HepG2 (cell line): ENCODE measurements at regions of chr10 and their contacts with region 1.

Region 1: DNA sequence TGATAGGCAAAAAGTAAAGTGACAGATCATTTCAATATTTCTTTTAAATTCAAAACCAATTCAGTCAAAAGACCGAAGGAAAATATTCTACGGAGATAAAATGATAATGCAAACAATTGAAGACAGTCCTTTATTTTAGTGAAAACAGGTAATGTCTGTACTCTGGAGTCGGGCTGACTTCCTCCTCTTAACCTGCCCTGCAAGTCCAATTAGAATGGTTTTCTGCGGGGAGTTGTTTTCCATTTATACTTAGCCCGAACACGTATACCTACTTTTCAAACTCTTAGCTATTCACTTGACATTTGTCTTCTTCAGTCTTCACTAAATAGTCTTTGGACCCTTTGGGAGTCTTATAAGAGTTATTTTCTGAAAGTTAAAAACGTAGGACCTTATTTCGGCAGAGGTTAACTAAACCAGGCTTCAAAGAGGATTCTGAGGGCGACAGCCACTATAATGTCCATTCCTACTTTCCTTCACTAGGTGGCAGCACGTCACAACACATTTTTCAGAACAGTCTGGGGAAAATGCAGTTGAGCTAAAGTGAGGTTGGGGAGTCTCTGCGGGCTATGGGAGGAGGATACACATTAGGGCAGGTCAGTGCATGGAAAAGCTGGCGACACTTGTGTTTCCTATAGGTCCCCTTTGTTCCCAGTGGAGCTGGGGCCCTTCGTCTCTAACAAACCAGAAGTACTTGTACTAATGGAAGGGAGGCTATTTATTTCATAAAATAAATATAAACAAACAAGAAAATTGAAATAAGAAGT is 472.0 kb downstream of the KCNMA1 start:
- DNase-seq: peak; percentile 40
- ATAC-seq: peak; percentile 80
- H3K4me3 ChIP-seq: no peak overlapping the region
- H3K27ac ChIP-seq: no peak overlapping the region
- H3K4me1 ChIP-seq: no peaks in the 10 kb centered on the region
- H3K27me3 ChIP-seq: 0 out of 5 replicates have a peak, but pooled peaks cover 0 to 1% of the 10 kb centered on the region in 2 experiments
- CTCF ChIP-seq: peak; percentile 83
- EP300 ChIP-seq: no peak
- POLR2A ChIP-seq: no peak
- RAD21 ChIP-seq: peak; percentile 35; the same call in 1 of the 2 replicates

Region 2: DNA sequence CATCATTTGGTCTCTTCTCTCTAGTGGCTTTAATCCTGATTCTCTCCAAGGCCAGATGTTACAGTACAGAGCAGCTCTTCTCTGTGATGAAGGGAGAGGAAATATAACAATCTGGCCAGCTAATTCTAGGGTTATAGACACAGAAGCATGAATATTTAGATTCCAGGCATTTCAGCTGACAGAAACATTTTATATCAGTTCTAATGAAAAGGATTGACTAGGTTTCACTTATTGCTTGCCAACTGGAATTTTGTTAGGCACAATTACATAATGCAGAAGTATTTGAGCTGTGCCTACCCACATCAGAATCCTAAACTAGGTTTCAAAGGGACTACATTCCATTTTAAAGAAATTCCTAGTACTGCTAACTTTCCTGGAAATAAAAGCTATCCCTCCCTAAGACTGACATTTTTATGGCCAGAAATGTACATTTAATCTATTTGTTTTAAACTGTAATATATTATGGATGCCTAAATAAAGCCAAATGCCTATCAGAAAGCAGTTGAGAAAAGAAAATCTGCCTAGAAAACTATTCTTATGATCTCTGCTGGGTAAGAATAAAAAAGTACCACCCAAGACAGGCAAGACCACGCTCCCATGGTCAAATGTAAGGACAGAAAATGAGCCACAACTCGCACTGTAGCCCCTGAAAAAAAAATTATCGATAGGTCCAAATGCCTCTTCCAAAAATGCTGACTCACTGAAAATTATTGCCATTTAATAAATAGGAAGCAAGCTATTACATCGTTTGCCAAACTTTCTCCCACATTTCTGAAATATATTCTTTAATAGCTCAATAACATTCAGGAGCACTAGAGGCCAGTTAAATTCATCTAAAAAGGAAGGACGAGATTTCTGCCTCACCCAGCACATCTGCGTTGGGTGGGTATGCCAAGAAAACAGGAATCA is 26.1 kb before region 1 on chr10:
- CTCF ChIA-PET with region 1: no interaction called
- POLR2A ChIA-PET with region 1: no interaction called
- in situ Hi-C with region 1: no loop called
- intact Hi-C with region 1: loop called (anchors 1 kb)
- DNase-seq: no peak
- ATAC-seq: no peak
- H3K4me3 ChIP-seq: no peak overlapping the region
- H3K27ac ChIP-seq: no peak overlapping the region
- H3K4me1 ChIP-seq: no peaks in the 10 kb centered on the region
- H3K27me3 ChIP-seq: peaks cover 1 to 14% of the 10 kb centered on the region in 2 experiments; a peak in 3 of 5 replicates
- CTCF ChIP-seq: no peak
- EP300 ChIP-seq: no peak
- POLR2A ChIP-seq: no peak
- RAD21 ChIP-seq: no peak

Region 3: DNA sequence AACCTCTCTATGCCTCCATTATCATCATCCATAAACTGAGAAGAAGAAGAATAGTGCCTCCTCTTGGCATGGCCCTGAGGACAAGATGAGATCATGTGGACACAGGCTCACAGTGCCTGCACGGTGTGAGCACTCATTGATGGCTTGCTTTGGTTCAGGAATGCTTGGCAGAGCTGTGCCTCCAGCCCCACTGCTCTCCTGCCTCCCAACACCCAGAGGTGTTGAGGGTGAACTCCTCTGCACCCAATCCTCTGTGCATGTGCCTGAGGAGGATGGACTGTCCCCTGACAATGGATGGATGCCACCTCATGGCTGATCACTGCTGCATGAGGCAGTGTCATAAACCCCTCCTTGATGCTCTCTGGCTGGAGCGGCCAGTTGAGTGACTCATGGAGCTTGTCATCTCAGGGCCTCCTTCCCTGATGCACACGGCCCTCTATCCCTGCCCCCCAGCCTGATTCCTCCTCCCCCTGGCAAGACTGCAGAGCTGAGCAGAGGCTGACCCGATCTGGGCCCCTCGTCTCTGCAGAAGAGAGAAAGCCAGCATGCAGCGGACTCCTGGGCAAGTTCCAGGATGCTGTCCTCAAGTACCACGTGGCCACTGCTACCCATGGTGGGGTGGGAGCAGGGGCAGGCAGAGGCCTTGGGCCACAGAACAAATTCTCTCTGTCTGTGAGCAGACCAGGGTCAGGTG is 335.7 kb after region 1 on chr10:
- CTCF ChIA-PET with region 1: no interaction called
- POLR2A ChIA-PET with region 1: no interaction called
- in situ Hi-C with region 1: no loop called
- intact Hi-C with region 1: loop called (anchors 10 kb)
- DNase-seq: no peak
- ATAC-seq: no peak
- H3K4me3 ChIP-seq: no peak overlapping the region
- H3K27ac ChIP-seq: no peak overlapping the region
- H3K4me1 ChIP-seq: no peaks in the 10 kb centered on the region
- H3K27me3 ChIP-seq: 0 out of 5 replicates have a peak, but pooled peaks cover 0 to 3% of the 10 kb centered on the region in 2 experiments
- CTCF ChIP-seq: no peak
- EP300 ChIP-seq: no peak
- POLR2A ChIP-seq: no peak
- RAD21 ChIP-seq: no peak

Region 4: DNA sequence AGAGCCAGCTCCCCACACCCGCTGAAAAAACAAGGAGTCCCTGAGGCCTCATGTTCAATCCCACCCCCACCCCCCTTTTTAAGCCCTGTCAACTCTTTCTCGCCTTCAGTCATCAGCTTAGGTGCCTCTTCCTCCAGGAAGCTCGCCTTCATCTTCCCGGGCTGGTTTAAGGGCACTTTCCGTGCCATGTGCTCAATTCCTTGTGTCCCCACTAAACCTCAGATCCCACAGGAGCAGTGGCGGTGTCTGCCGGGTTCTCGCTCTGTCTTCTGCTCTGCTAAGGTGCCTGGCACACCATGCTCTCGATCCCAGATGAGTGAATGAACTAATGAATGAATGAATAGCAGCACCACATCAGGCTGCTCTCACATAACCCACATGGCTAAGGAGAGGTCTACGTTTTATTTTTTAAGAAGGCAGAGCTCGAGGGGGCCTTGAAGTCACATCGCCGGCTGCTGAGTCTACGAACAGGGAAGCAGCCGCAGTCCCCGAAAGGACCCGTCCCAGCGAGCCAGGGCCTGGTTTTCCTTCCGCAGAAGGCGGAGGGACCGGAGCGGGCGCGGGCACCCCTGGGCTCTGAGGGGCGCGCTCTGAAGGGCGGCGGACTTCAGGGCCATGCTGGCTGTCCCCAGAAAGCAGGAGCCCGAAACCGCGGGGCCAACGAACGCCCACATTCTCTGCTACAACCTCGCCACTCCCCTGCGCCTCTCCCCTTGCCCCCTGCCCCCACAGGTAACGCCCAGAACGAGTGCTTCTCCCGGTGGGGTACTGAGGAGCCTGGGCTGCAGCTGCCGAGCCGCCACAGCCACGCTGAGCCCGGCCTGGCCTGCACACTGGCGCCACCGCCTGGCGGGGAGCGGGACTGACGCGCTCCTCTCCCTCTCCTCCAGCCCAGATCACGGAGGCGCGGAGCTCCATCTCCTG is 545.4 kb after region 1 on chr10:
- CTCF ChIA-PET with region 1: interaction called, 6 read pairs
- POLR2A ChIA-PET with region 1: no interaction called
- in situ Hi-C with region 1: loop called (anchors 10 kb)
- intact Hi-C with region 1: no loop called
- DNase-seq: peak; percentile 5
- ATAC-seq: peak; percentile 98
- H3K4me3 ChIP-seq: peak overlapping the region in 1 of 3 experiments; percentile 16; a peak in 1 of 6 replicates
- H3K27ac ChIP-seq: no peak overlapping the region
- H3K4me1 ChIP-seq: no peaks in the 10 kb centered on the region
- H3K27me3 ChIP-seq: peaks cover 6 to 37% of the 10 kb centered on the region in 2 experiments
- CTCF ChIP-seq: peak; percentile 96
- EP300 ChIP-seq: no peak
- POLR2A ChIP-seq: no peak
- RAD21 ChIP-seq: peak; percentile 70

Region 5: DNA sequence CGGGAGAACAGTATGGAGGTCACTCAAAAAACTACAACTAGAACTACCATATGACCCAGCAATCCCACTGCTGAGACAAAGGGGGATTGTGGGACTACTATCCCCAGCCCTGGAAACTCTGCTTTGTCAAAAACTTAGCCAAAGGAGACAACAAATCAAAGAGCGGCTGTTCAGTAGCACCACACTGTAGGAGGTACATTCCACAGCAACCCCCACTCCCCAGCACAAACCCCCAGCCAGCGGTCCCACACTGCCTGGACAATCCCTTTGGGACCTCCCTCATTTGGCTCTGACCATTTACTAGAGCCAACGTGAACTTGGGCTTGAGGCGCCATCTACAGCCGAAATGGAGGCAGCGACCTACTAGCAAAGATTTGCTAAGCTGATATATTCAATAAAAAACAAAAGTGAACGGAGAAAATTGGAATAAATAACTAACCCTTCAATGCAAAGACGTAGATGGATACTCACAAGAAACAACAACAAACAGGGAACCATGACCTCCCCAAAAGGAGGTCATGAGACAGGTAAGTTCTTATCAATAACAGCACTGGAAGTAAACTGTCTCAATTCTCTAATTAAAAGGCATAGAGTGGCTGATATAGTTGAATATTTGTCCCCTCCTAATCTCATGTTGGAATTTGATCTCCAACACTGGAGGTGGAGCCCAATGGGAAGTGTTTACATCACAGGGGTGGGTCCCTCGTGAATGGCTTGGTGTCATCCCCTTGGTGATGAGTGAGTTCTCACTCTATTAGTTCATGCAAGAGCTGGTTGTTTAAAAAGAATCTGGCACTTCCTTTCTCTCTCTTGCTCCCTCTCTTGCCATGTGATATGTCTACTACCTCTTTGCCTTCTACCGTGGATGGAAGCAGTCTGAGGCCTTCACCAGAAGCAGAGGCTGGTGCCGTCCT is 590.9 kb after region 1 on chr10:
- CTCF ChIA-PET with region 1: no interaction called
- POLR2A ChIA-PET with region 1: no interaction called
- in situ Hi-C with region 1: no loop called
- intact Hi-C with region 1: loop called (anchors 5 kb)
- DNase-seq: peak; percentile 59
- ATAC-seq: peak; percentile 95
- H3K4me3 ChIP-seq: no peak overlapping the region
- H3K27ac ChIP-seq: no peak overlapping the region
- H3K4me1 ChIP-seq: no peaks in the 10 kb centered on the region
- H3K27me3 ChIP-seq: no peaks in the 10 kb centered on the region
- CTCF ChIP-seq: peak; percentile 76
- EP300 ChIP-seq: no peak
- POLR2A ChIP-seq: no peak
- RAD21 ChIP-seq: peak; percentile 55; the same call in 1 of the 2 replicates